ENCODE measurements at regions of chr12 and their contacts with region 1.

Region 1: GRCh38 chr12:113818833-113819232 is 147.3 kb downstream of the RBM19 start:
- DNase-seq: peak; percentile 82
- ATAC-seq: peak; percentile 75
- H3K4me3 Mint-ChIP-seq: no peak overlapping the region
- H3K27ac Mint-ChIP-seq: no peak overlapping the region
- H3K4me1 Mint-ChIP-seq: peaks cover 12% of the 10 kb centered on the region
- H3K27me3 Mint-ChIP-seq: no peaks in the 10 kb centered on the region
- CTCF ChIP-seq: peak; percentile 60

Region 2: GRCh38 chr12:113439606-113440030 is 379.2 kb before region 1 on chr12:
- CTCF ChIA-PET with region 1: interaction called, 10 read pairs
- POLR2A ChIA-PET with region 1: no interaction called
- DNase-seq: peak; percentile 85
- ATAC-seq: peak; percentile 94
- H3K4me3 Mint-ChIP-seq: no peak overlapping the region
- H3K27ac Mint-ChIP-seq: no peak overlapping the region
- H3K4me1 Mint-ChIP-seq: peaks cover 3% of the 10 kb centered on the region; the same call in 1 of the 2 replicates
- H3K27me3 Mint-ChIP-seq: no peaks in the 10 kb centered on the region
- CTCF ChIP-seq: peak; percentile 68

Region 3: DNA sequence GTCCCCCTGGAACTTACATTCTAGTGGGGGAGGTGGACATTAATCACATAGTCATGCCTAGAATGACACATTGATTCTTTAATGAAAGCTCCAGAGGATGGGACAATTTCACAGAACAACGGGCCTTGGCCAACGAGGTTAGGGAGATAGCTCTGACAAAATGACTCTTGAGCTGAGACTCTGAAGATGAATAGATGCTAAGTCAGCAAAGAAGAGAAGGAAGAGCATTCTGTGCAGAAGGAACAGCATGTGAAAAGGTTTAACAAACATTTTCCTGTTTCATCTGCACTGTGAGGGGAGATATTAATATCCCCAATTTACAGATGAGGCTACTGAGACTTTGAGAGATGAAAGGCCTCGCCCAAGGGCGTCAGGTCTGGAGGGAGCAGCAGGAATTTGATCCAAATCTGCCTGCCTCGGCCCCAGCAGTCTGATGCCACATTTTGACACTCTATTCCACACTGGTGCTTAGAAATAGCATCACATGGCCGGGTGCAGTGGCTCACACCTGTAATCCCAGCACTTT is 46.3 kb before region 1 on chr12:
- CTCF ChIA-PET with region 1: no interaction called
- POLR2A ChIA-PET with region 1: no interaction called
- DNase-seq: no peak
- ATAC-seq: no peak
- H3K4me3 Mint-ChIP-seq: no peak overlapping the region
- H3K27ac Mint-ChIP-seq: no peak overlapping the region
- H3K4me1 Mint-ChIP-seq: no peaks in the 10 kb centered on the region
- H3K27me3 Mint-ChIP-seq: peaks cover 3% of the 10 kb centered on the region; the same call in 1 of the 2 replicates
- CTCF ChIP-seq: no peak

Region 4: GRCh38 chr12:113796852-113797534 is 21.8 kb before region 1 on chr12:
- CTCF ChIA-PET with region 1: interaction called, 14 read pairs
- POLR2A ChIA-PET with region 1: no interaction called
- DNase-seq: no peak
- ATAC-seq: no peak; the same call in 1 of the 2 replicates
- H3K4me3 Mint-ChIP-seq: no peak overlapping the region
- H3K27ac Mint-ChIP-seq: no peak overlapping the region
- H3K4me1 Mint-ChIP-seq: no peaks in the 10 kb centered on the region
- H3K27me3 Mint-ChIP-seq: peaks cover 4% of the 10 kb centered on the region; the same call in 1 of the 2 replicates
- CTCF ChIP-seq: no peak

Region 5: GRCh38 chr12:113860950-113861349 is 42.1 kb after region 1 on chr12:
- CTCF ChIA-PET with region 1: interaction called, 12 read pairs
- POLR2A ChIA-PET with region 1: interaction called, 5 read pairs
- DNase-seq: no peak
- ATAC-seq: no peak
- H3K4me3 Mint-ChIP-seq: no peak overlapping the region
- H3K27ac Mint-ChIP-seq: peak overlapping the region; percentile 83
- H3K4me1 Mint-ChIP-seq: peaks cover 47% of the 10 kb centered on the region
- H3K27me3 Mint-ChIP-seq: no peaks in the 10 kb centered on the region
- CTCF ChIP-seq: no peak

Region 6: GRCh38 chr12:113933201-113933786 is 114.5 kb after region 1 on chr12:
- CTCF ChIA-PET with region 1: no interaction called
- POLR2A ChIA-PET with region 1: no interaction called
- DNase-seq: no peak
- ATAC-seq: peak; percentile 38
- H3K4me3 Mint-ChIP-seq: no peak overlapping the region
- H3K27ac Mint-ChIP-seq: no peak overlapping the region
- H3K4me1 Mint-ChIP-seq: peaks cover 18% of the 10 kb centered on the region
- H3K27me3 Mint-ChIP-seq: no peaks in the 10 kb centered on the region
- CTCF ChIP-seq: no peak

Measured in WTC11 (cell line).